MCF 10A (cell line): ENCODE measurements at regions of chr22 and their contacts with region 1.

Region 1: DNA sequence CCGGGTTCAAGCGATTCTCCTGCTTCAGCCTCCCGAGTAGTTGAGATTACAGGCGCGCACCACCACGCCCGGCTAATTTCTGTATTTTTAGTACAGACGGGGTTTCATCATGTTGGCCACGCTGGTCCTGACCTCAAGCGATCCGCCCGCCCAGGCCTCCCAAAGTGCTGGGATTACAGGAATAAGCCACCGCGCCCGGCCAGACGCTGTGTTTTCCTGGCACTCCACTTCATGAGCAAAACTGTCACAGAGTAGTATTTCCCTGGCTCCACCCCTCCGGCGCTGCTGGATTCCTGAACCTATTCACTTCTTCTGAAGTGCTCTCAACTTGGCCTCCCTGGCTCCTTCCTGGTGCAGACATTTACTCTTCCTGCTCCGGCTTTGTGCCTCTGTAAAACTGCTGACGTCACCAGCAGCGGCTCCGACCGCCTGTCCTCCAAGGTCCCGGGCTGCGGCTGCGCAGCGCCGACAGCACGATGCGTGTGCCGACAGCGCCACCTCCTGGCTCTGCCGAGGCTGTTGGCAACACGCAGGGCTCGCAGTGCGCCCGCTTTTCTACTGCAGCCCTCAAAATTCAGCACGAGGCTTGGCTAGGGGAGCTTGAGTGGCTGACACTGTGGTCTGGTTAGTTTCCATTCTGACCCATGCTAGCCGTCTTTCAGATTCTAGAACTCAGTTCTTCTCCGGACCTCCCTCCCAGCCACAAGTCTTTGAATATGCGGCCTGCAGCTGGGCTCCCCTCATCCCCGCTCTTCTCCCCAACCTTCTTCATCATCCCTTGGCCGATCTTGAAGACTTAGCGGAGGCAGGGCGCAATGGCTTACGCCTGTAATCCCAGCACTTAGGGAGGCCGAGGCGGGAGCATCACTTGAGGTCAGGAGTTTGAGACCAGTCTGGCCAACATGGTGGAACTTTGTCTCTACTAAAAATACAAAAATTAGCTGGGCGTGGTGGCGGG is 36.6 kb downstream of the APOL3 start:
- DNase-seq: peak; percentile 88
- H3K4me3 Mint-ChIP-seq: peak overlapping the region; percentile 66
- H3K27ac Mint-ChIP-seq: peak overlapping the region; percentile 73
- H3K4me1 Mint-ChIP-seq: peaks cover 9% of the 10 kb centered on the region
- H3K27me3 Mint-ChIP-seq: peaks cover 28% of the 10 kb centered on the region
- CTCF ChIP-seq: peak; percentile 93

Region 2: GRCh38 chr22:35350539-35351503 is 773.1 kb before region 1 on chr22:
- CTCF ChIA-PET with region 1: interaction called, 6 read pairs
- POLR2A ChIA-PET with region 1: interaction called, 3 read pairs
- intact Hi-C with region 1: loop called (anchors 2 kb)
- DNase-seq: peak; percentile 91
- H3K4me3 Mint-ChIP-seq: peak overlapping the region; percentile 74
- H3K27ac Mint-ChIP-seq: no peak overlapping the region
- H3K4me1 Mint-ChIP-seq: peaks cover 11% of the 10 kb centered on the region
- H3K27me3 Mint-ChIP-seq: no peaks in the 10 kb centered on the region
- CTCF ChIP-seq: peak; percentile 92

Region 3: DNA sequence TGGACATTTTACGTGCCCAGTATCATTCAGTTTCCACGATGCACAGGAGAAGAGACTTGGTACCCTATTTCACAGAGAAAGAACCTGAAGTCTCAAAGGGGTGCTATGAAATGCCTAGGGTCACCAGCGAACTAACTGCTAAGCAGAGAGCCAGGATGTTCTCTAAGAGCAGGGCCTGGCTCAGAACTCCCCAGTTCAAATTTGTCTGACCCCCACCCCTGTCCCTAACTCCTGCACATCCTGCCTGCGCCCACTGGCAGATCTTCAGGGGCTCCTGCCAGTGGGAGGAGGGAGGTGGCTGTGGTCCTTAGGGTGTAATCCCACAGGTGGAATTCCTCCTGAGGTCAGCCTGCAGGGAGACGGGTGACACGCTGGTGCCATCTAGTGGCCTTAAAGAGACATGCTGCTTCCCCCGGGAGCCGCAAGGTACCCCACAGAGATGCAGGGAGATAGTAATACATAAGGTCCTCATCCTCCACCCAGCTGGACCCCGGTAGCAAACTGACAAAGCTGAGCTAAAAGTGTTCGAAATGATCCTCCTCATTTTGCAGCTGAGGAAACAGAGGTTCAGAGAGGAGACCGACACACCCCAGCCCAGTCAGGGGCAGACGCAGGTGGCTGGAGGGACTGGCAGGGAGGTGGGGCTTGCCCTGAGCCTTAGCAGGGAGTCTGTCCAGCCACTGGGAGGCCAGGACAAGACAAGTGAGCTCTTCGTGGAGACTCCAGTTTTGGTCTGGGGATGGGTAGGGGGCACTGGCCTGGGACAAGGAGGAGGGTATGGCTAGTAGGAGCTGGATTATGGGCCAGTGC is 540.9 kb before region 1 on chr22:
- CTCF ChIA-PET with region 1: interaction called, 11 read pairs
- POLR2A ChIA-PET with region 1: no interaction called
- intact Hi-C with region 1: no loop called
- DNase-seq: peak; percentile 61
- H3K4me3 Mint-ChIP-seq: no peak overlapping the region
- H3K27ac Mint-ChIP-seq: no peak overlapping the region
- H3K4me1 Mint-ChIP-seq: peaks cover 4% of the 10 kb centered on the region
- H3K27me3 Mint-ChIP-seq: no peaks in the 10 kb centered on the region
- CTCF ChIP-seq: peak; percentile 91

Region 4: GRCh38 chr22:35749808-35750207 is 374.1 kb before region 1 on chr22:
- CTCF ChIA-PET with region 1: interaction called, 3 read pairs
- POLR2A ChIA-PET with region 1: no interaction called
- intact Hi-C with region 1: loop called (anchors 5 kb)
- DNase-seq: no peak
- H3K4me3 Mint-ChIP-seq: no peak overlapping the region
- H3K27ac Mint-ChIP-seq: no peak overlapping the region
- H3K4me1 Mint-ChIP-seq: no peaks in the 10 kb centered on the region
- H3K27me3 Mint-ChIP-seq: no peaks in the 10 kb centered on the region
- CTCF ChIP-seq: no peak

Region 5: DNA sequence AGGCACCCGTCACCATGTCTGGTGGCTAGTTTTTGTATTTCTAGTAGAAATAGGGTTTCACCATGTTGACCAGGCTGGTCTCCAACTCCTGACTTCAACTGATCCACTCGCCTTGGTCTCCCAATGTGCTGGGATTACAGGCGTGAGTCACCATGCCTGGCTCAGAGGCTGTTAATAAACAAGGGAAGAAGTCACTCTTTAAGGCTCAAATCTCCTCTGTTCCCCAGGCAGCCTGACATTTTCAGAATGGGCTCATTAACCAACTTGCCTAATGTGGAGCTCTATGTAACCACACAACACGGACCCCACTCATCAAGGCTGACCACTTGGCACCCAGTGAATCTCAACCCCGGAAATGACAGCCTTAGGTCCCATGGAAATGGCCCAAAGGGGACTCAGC is 12.5 kb after region 1 on chr22:
- CTCF ChIA-PET with region 1: interaction called, 16 read pairs
- POLR2A ChIA-PET with region 1: interaction called, 3 read pairs
- intact Hi-C with region 1: no loop called
- DNase-seq: peak; percentile 30
- H3K4me3 Mint-ChIP-seq: no peak overlapping the region
- H3K27ac Mint-ChIP-seq: no peak overlapping the region
- H3K4me1 Mint-ChIP-seq: no peaks in the 10 kb centered on the region
- H3K27me3 Mint-ChIP-seq: peaks cover 36% of the 10 kb centered on the region
- CTCF ChIP-seq: no peak